ENCODE measurements at regions of chr6 and their contacts with region 1.

Region 1: DNA sequence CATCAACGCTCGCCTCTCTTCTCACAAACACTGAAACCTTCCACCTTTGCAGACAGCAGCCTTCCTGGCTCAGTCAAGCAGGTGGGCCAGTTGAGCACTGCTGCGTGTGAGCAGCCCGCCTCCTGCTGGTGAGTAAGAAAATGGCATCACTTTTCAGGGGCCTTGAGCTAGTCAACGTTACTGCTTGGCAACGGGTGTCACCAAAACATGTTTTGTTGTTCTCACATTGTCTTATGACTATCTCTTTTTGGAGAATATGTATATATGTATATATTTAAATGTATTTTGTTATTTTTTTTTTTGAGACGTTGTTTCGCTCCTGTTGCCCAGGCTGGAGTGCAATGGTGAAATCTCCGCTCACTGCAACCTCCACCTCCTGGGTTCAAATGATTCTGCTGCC is 97.0 kb upstream of the AGPAT4 start:
- H3K4me3 Mint-ChIP-seq: no peak overlapping the region
- H3K27ac Mint-ChIP-seq: no peak overlapping the region
- H3K4me1 Mint-ChIP-seq: peaks cover 46% of the 10 kb centered on the region
- H3K27me3 Mint-ChIP-seq: no peaks in the 10 kb centered on the region

Region 2: GRCh38 chr6:160733050-160733646 is 637.7 kb before region 1 on chr6:
- intact Hi-C with region 1: loop called (anchors 10 kb)
- H3K4me3 Mint-ChIP-seq: no peak overlapping the region
- H3K27ac Mint-ChIP-seq: no peak overlapping the region
- H3K4me1 Mint-ChIP-seq: no peaks in the 10 kb centered on the region
- H3K27me3 Mint-ChIP-seq: no peaks in the 10 kb centered on the region

Region 3: GRCh38 chr6:160986851-160987250 is 384.0 kb before region 1 on chr6:
- intact Hi-C with region 1: loop called (anchors 2 kb)
- H3K4me3 Mint-ChIP-seq: peak overlapping the region; percentile 11
- H3K27ac Mint-ChIP-seq: peak overlapping the region; percentile 84
- H3K4me1 Mint-ChIP-seq: peaks cover 29% of the 10 kb centered on the region
- H3K27me3 Mint-ChIP-seq: peaks cover 2% of the 10 kb centered on the region

Region 4: DNA sequence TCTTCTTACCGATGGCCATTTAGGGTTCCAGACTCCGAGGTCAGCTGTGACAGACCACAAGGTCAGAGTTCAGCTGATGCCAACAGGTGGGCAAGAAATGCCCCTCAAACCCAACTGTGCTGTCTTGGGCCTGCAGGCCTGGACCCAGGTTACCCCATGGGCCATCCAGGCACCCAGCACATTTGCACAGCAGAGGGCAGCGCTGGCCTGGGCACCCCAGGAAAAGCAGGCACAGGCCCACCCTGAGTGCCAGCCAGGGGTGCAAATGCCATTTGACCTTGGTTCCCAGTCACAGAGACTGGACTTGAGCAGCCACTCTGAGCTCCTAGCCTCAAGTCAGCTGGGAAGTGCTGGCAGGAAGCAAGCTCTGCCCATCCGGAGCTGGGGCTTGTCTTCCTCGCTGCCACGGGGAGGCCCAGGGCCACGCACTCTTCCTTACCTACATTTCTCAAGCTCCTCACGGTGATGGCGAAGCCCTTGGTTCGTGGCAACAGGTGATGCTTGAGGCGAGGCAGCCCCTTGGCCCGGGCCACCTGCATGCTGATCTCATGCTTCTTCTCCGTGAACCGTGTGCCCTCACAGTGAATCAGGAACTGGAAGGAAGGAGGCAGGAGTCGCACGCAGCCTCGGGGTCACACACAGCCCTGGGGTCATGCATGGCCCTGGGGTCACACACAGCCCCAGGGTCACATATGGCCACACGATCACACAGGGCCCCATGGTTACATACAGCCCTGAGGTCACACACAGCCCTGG is 217.8 kb before region 1 on chr6:
- intact Hi-C with region 1: loop called (anchors 2 kb)
- H3K4me3 Mint-ChIP-seq: no peak overlapping the region
- H3K27ac Mint-ChIP-seq: peak overlapping the region; percentile 36
- H3K4me1 Mint-ChIP-seq: peaks cover 11% of the 10 kb centered on the region
- H3K27me3 Mint-ChIP-seq: no peaks in the 10 kb centered on the region

Region 5: GRCh38 chr6:161273752-161274487 is 97.0 kb before region 1 on chr6 and contains the start of gene AGPAT4:
- intact Hi-C with region 1: loop called (anchors 5 kb)
- H3K4me3 Mint-ChIP-seq: peak within 1 kb of the TSS; percentile 77
- H3K27ac Mint-ChIP-seq: peak within 1 kb of the TSS; percentile 90
- H3K4me1 Mint-ChIP-seq: peaks cover 36% of the 10 kb centered on the region
- H3K27me3 Mint-ChIP-seq: peaks cover 8% of the 10 kb centered on the region

Region 6: DNA sequence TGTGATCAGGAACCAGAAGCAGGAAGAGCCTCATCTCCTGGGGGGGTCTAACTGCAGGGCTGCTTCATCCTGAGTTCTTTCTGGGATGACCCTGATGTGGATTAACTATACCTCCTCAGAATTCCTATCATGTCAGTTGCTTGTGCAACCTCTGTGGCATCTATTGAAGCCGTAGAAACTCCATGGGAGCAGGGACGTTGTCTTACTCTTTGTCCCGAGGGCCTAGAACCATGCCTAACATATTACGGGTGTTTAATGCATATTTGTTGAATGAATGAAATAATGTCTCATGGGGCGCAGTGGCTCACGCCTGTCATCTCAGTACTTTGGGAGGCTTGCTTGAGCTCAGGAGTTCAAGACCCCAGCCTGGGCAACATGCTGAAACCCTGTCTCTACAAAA is 13.1 kb after region 1 on chr6:
- intact Hi-C with region 1: no loop called
- H3K4me3 Mint-ChIP-seq: no peak overlapping the region
- H3K27ac Mint-ChIP-seq: no peak overlapping the region
- H3K4me1 Mint-ChIP-seq: no peaks in the 10 kb centered on the region
- H3K27me3 Mint-ChIP-seq: peaks cover 3% of the 10 kb centered on the region

Measured in dendritic cell treated with granulocyte-macrophage colony-stimulating factor and Interleukin-4, amounts not matched to agents 40 ng/mL and 50 ng/mL, for 4 days (primary cell).